ENCODE measurements at regions of chr3 and their contacts with region 1.

Region 1: GRCh38 chr3:112561731-112562688 is at the starts of genes ATG3 and SLC35A5:
- DNase-seq: peak; percentile 99
- H3K4me3 ChIP-seq: peak within 1 kb of the TSS; percentile 94 to 100 (median 97)
- H3K27ac ChIP-seq: peak within 1 kb of the TSS; percentile 78
- H3K4me1 ChIP-seq: peaks cover 17% of the 10 kb centered on the region
- H3K27me3 ChIP-seq: no peaks in the 10 kb centered on the region
- CTCF ChIP-seq: peak in 1 of 2 donors; percentile 10
- POLR2A ChIP-seq: peak; percentile 89
- total RNA-seq, gene ATG3: 62.4 TPM in 2 replicates
- total RNA-seq, gene SLC35A5: 25.1 and 25.6 TPM in 2 replicates

Region 2: GRCh38 chr3:112605285-112605684 is 43.3 kb after region 1 on chr3:
- CTCF ChIA-PET with region 1: no interaction called
- POLR2A ChIA-PET with region 1: interaction called, 3 read pairs
- dilution Hi-C with region 1: no loop called
- intact Hi-C with region 1: loop called (anchors 1 kb)
- DNase-seq: peak; percentile 98
- H3K4me3 ChIP-seq: peak overlapping the region in 1 of 3 experiments; percentile 38
- H3K27ac ChIP-seq: peak overlapping the region; percentile 94
- H3K4me1 ChIP-seq: peaks cover 17% of the 10 kb centered on the region
- H3K27me3 ChIP-seq: no peaks in the 10 kb centered on the region
- CTCF ChIP-seq: no peak
- POLR2A ChIP-seq: no peak

Region 3: DNA sequence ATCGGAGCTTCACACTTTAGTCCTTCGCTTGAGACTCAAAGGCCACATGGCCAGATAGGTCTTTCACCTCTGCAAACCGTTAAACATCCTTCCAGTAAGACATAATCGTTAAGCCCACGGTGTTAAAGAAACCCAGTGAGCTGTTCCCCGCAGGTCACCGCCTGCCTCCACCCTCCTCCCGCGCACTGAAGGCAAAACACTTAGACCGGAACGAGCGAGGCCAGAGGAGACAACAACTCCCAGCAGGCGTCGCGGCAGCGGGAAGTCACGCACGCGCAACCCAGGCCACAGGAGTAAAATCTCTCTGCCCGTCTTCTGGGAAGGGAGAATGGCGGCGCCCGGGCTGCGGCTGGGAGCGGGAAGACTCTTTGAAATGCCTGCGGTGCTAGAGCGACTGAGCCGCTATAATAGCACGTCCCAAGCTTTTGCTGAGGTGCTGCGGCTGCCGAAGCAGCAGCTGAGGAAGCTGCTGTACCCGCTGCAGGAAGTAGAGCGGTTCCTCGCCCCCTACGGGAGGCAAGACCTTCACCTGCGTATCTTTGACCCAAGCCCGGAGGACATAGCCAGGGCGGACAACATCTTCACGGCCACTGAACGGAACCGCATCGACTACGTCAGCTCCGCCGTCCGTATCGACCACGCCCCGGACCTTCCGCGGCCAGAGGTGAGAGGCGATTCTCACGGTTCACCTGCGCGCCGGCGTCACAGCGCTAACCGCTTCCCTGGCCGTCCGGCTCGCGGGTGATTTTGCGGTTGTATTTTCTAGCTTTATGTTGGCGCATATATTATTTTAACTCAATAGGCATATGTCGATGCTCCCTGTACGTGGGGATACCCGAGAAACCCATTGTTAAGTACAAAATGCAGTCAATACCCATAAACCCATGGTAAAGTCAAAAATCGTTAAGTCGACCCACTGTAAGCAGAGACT is 428.9 kb after region 1 on chr3 and contains the start of gene GTPBP8:
- CTCF ChIA-PET with region 1: no interaction called
- POLR2A ChIA-PET with region 1: no interaction called
- dilution Hi-C with region 1: no loop called
- intact Hi-C with region 1: loop called (anchors 5 kb)
- DNase-seq: peak; percentile 87
- H3K4me3 ChIP-seq: peak within 1 kb of the TSS; percentile 62 to 92 (median 89)
- H3K27ac ChIP-seq: peak within 1 kb of the TSS; percentile 52
- H3K4me1 ChIP-seq: peaks cover 14% of the 10 kb centered on the region
- H3K27me3 ChIP-seq: no peaks in the 10 kb centered on the region
- CTCF ChIP-seq: peak in 1 of 2 donors; percentile 15
- POLR2A ChIP-seq: peak; percentile 82
- total RNA-seq, gene GTPBP8: 13.7 and 15.4 TPM in 2 replicates

Region 4: DNA sequence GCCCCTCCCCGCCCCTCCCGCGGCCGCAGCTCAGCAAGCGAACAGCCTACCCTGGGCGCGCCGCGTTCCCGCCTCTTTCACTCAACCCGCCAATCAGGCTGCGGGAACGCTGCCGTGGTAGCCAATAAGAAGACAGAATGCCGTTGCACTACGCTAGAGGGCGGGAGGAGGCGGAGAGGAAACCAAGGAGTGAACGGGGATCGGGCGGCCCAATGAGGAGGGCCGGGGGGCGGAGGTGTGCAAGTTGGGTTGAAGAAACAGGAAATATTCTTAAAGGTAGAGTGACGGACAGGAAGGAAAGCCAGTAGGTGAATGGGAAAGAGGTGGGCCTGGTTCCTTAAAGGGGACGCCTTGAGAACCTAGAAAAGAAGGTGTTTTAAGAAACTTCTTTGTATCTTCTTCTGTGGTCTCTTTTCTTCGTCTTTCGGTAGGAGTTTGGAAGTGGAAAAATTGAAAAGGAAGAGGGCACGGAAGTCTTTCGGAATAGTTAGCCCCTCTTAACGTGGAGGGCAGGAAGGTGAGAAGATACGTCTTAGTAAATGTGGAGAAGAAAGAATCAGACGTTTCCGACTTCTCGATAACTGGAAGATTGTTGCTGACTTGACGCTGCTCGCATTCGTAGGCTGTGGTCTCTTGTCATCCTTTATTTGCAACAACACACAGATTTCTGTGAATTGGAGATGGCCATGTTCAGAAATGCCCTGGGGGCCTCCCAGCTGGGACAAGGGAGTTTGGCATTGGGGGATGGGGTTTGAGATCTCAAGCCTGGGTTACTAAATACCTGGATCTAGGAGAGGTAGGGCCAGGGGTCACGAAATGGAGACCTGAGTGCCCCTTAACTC is 1134.9 kb after region 1 on chr3:
- CTCF ChIA-PET with region 1: no interaction called
- POLR2A ChIA-PET with region 1: no interaction called
- dilution Hi-C with region 1: no loop called
- intact Hi-C with region 1: loop called (anchors 10 kb)
- DNase-seq: peak; percentile 100
- H3K4me3 ChIP-seq: peak overlapping the region; percentile 37 to 94 (median 90)
- H3K27ac ChIP-seq: peak overlapping the region; percentile 30
- H3K4me1 ChIP-seq: peaks cover 14% of the 10 kb centered on the region
- H3K27me3 ChIP-seq: no peaks in the 10 kb centered on the region
- CTCF ChIP-seq: peak in 1 of 2 donors; percentile 14
- POLR2A ChIP-seq: no peak

Measured in endothelial cell of umbilical vein (primary cell).